H1 (cell line): ENCODE measurements at regions of chr18 and their contacts with region 1.

Region 1: GRCh38 chr18:53153281-53153680 is 813.3 kb downstream of the DCC start:
- DNase-seq: peak in 1 of 2 experiments; percentile 62
- H3K4me3 ChIP-seq: no peak overlapping the region
- H3K27ac ChIP-seq: no peak overlapping the region
- H3K4me1 ChIP-seq: no peaks in the 10 kb centered on the region
- H3K27me3 ChIP-seq: no peaks in the 10 kb centered on the region
- CTCF ChIP-seq: peak; percentile 34 to 65 (median 59)
- EP300 ChIP-seq: no peak
- POLR2A ChIP-seq: no peak
- RAD21 ChIP-seq: peak; percentile 47 to 62

Region 2: DNA sequence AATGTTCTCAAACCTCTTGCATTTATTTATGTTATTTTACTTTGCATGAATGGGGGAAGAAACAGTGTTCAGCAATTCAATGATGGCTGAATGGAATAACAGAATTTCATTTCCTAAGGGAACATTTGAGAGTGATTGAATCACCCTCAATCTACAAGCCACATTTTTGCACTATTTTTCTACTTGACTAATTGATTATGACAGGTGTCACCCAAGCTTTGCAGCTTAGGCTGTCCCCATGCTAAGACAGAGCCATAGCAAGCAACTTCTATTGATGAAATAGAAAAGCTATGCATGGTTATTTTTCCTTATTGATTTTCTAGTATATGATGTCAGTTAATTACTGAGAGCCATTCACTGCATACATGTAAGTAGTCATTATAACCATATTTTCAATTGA is 17.6 kb before region 1 on chr18:
- CTCF ChIA-PET with region 1: interaction called, 15 read pairs
- POLR2A ChIA-PET with region 1: no interaction called
- DNase-seq: no peak
- H3K4me3 ChIP-seq: no peak overlapping the region
- H3K27ac ChIP-seq: no peak overlapping the region
- H3K4me1 ChIP-seq: no peaks in the 10 kb centered on the region; a peak in 1 of 7 replicates
- H3K27me3 ChIP-seq: no peaks in the 10 kb centered on the region
- CTCF ChIP-seq: no peak
- EP300 ChIP-seq: no peak
- POLR2A ChIP-seq: no peak
- RAD21 ChIP-seq: no peak

Region 3: GRCh38 chr18:53142005-53142404 is 11.3 kb before region 1 on chr18:
- CTCF ChIA-PET with region 1: interaction called, 15 read pairs
- POLR2A ChIA-PET with region 1: no interaction called
- DNase-seq: no peak
- H3K4me3 ChIP-seq: no peak overlapping the region
- H3K27ac ChIP-seq: no peak overlapping the region
- H3K4me1 ChIP-seq: no peaks in the 10 kb centered on the region; a peak in 1 of 7 replicates
- H3K27me3 ChIP-seq: no peaks in the 10 kb centered on the region
- CTCF ChIP-seq: no peak
- EP300 ChIP-seq: no peak
- POLR2A ChIP-seq: no peak
- RAD21 ChIP-seq: no peak

Region 4: GRCh38 chr18:53165770-53166169 is 12.5 kb after region 1 on chr18:
- CTCF ChIA-PET with region 1: interaction called, 14 read pairs
- POLR2A ChIA-PET with region 1: no interaction called
- DNase-seq: no peak
- H3K4me3 ChIP-seq: no peak overlapping the region
- H3K27ac ChIP-seq: no peak overlapping the region
- H3K4me1 ChIP-seq: no peaks in the 10 kb centered on the region
- H3K27me3 ChIP-seq: peaks cover 0 to 1% (median 0%) of the 10 kb centered on the region in 4 experiments; a peak in 1 of 7 replicates
- CTCF ChIP-seq: no peak
- EP300 ChIP-seq: no peak
- POLR2A ChIP-seq: no peak
- RAD21 ChIP-seq: no peak

Region 5: GRCh38 chr18:53191634-53192033 is 38.4 kb after region 1 on chr18:
- CTCF ChIA-PET with region 1: no interaction called
- POLR2A ChIA-PET with region 1: no interaction called
- DNase-seq: no peak
- H3K4me3 ChIP-seq: no peak overlapping the region
- H3K27ac ChIP-seq: no peak overlapping the region
- H3K4me1 ChIP-seq: 0 out of 7 replicates have a peak, but pooled peaks cover 0 to 2% (median 0%) of the 10 kb centered on the region in 4 experiments
- H3K27me3 ChIP-seq: no peaks in the 10 kb centered on the region
- CTCF ChIP-seq: no peak
- EP300 ChIP-seq: no peak
- POLR2A ChIP-seq: no peak
- RAD21 ChIP-seq: no peak

Region 6: GRCh38 chr18:53219853-53220252 is 66.6 kb after region 1 on chr18:
- CTCF ChIA-PET with region 1: no interaction called
- POLR2A ChIA-PET with region 1: no interaction called
- DNase-seq: no peak
- H3K4me3 ChIP-seq: no peak overlapping the region
- H3K27ac ChIP-seq: no peak overlapping the region
- H3K4me1 ChIP-seq: no peaks in the 10 kb centered on the region; a peak in 1 of 7 replicates
- H3K27me3 ChIP-seq: no peaks in the 10 kb centered on the region
- CTCF ChIP-seq: no peak
- EP300 ChIP-seq: no peak
- POLR2A ChIP-seq: no peak
- RAD21 ChIP-seq: no peak

Region 7: DNA sequence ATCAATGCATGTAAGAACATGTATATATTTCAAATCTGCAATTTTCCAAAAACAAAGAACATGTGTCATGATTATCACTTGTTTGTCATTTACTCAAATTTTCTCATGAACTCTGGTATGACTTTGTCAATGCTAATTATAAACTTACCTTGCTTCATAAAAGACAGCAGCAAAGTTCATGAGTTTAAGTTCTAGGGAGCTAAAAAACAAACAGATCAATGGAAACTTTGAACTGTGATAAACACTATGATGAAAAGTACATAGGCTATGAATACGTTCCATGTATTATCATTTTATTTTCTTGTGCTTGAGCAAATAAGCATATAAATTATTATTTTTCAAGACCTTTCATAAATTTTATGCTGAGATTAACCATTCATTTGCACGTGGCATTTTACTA is 130.4 kb after region 1 on chr18:
- CTCF ChIA-PET with region 1: no interaction called
- POLR2A ChIA-PET with region 1: no interaction called
- DNase-seq: no peak
- H3K4me3 ChIP-seq: no peak overlapping the region
- H3K27ac ChIP-seq: no peak overlapping the region
- H3K4me1 ChIP-seq: no peaks in the 10 kb centered on the region
- H3K27me3 ChIP-seq: no peaks in the 10 kb centered on the region
- CTCF ChIP-seq: no peak
- EP300 ChIP-seq: no peak
- POLR2A ChIP-seq: no peak
- RAD21 ChIP-seq: no peak